CD4-positive, alpha-beta memory T cell (primary cell): ENCODE measurements at regions of chr3 and their contacts with region 1.

Region 1: DNA sequence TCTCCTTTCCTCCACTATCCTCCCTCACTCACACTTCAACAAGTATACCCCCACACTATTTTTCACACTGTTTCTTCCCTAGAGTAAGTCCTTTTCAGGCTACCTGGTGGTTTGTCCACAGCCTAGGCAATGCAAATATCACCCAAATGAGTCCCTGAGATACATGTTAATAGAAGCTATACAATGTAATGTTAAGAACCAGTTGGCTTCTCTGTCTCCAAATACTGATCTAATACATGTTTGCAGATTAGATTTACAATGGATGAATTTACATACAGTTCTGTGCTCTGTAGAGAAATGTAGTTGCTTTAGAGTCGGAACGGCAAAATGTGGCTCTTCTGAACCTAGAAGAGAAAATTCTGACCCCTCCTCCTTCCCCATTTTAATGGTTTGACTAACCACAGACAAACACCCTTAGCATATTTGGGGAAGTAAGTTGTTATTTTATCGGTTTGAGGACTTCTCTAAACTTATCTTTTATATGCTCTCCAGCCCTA is 63.6 kb upstream of the MBNL1 start:
- DNase-seq: peak in 3 of 5 donors; percentile 41 to 53 (median 47)
- H3K4me3 ChIP-seq: peak overlapping the region; percentile 41 to 63
- H3K4me3 Mint-ChIP-seq: peak overlapping the region; percentile 91 to 100 (median 98)
- H3K27ac ChIP-seq: peak overlapping the region; percentile 75
- H3K27ac Mint-ChIP-seq: peak overlapping the region; percentile 91 to 98 (median 96)
- H3K4me1 ChIP-seq: peaks cover 77% of the 10 kb centered on the region
- H3K4me1 Mint-ChIP-seq: peaks cover 41 to 79% (median 56%) of the 10 kb centered on the region in 4 donors
- H3K27me3 ChIP-seq: no peaks in the 10 kb centered on the region
- H3K27me3 Mint-ChIP-seq: no peaks in the 10 kb centered on the region

Region 2: GRCh38 chr3:152193673-152194267 is 11.4 kb before region 1 on chr3:
- CTCF ChIA-PET with region 1: interaction called, 4 read pairs
- POLR2A ChIA-PET with region 1: interaction called, 41 read pairs
- intact Hi-C with region 1: loop called (anchors 1 kb)
- DNase-seq: peak; percentile 63 to 79 (median 68)
- H3K4me3 ChIP-seq: peak overlapping the region; percentile 31 to 37
- H3K4me3 Mint-ChIP-seq: peak overlapping the region; percentile 81 to 97 (median 90)
- H3K27ac ChIP-seq: peak overlapping the region; percentile 62
- H3K27ac Mint-ChIP-seq: peak overlapping the region; percentile 89 to 98 (median 92)
- H3K4me1 ChIP-seq: peaks cover 82% of the 10 kb centered on the region
- H3K4me1 Mint-ChIP-seq: peaks cover 60 to 85% (median 72%) of the 10 kb centered on the region in 4 donors
- H3K27me3 ChIP-seq: no peaks in the 10 kb centered on the region
- H3K27me3 Mint-ChIP-seq: no peaks in the 10 kb centered on the region

Region 3: GRCh38 chr3:152219216-152219615 is 14.1 kb after region 1 on chr3:
- CTCF ChIA-PET with region 1: interaction called, 4 read pairs
- POLR2A ChIA-PET with region 1: interaction called, 23 read pairs
- intact Hi-C with region 1: loop called (anchors 2 kb)
- DNase-seq: no peak
- H3K4me3 ChIP-seq: no peak overlapping the region
- H3K4me3 Mint-ChIP-seq: peak overlapping the region; percentile 9 to 82 (median 40)
- H3K27ac ChIP-seq: no peak overlapping the region
- H3K27ac Mint-ChIP-seq: peak overlapping the region in 6 of 7 donors; percentile 9 to 65 (median 31)
- H3K4me1 ChIP-seq: peaks cover 49% of the 10 kb centered on the region
- H3K4me1 Mint-ChIP-seq: peaks cover 36 to 69% (median 50%) of the 10 kb centered on the region in 4 donors
- H3K27me3 ChIP-seq: no peaks in the 10 kb centered on the region
- H3K27me3 Mint-ChIP-seq: no peaks in the 10 kb centered on the region

Region 4: GRCh38 chr3:152235709-152236298 is 30.7 kb after region 1 on chr3:
- CTCF ChIA-PET with region 1: interaction called, 4 read pairs
- POLR2A ChIA-PET with region 1: interaction called, 193 read pairs
- intact Hi-C with region 1: no loop called
- DNase-seq: no peak
- H3K4me3 ChIP-seq: no peak overlapping the region
- H3K4me3 Mint-ChIP-seq: peak overlapping the region in 5 of 8 donors; percentile 8 to 74 (median 26)
- H3K27ac ChIP-seq: no peak overlapping the region
- H3K27ac Mint-ChIP-seq: peak overlapping the region in 6 of 7 donors; percentile 49 to 92 (median 80)
- H3K4me1 ChIP-seq: peaks cover 72% of the 10 kb centered on the region
- H3K4me1 Mint-ChIP-seq: peaks cover 55 to 83% (median 68%) of the 10 kb centered on the region in 4 donors
- H3K27me3 ChIP-seq: no peaks in the 10 kb centered on the region
- H3K27me3 Mint-ChIP-seq: no peaks in the 10 kb centered on the region

Region 5: GRCh38 chr3:152281133-152281713 is 76.1 kb after region 1 on chr3:
- CTCF ChIA-PET with region 1: interaction called, 3 read pairs
- POLR2A ChIA-PET with region 1: interaction called, 41 read pairs
- intact Hi-C with region 1: no loop called
- DNase-seq: no peak
- H3K4me3 ChIP-seq: no peak overlapping the region
- H3K4me3 Mint-ChIP-seq: peak overlapping the region; percentile 15 to 87 (median 70)
- H3K27ac ChIP-seq: peak overlapping the region; percentile 61
- H3K27ac Mint-ChIP-seq: peak overlapping the region; percentile 62 to 88 (median 76)
- H3K4me1 ChIP-seq: peaks cover 97% of the 10 kb centered on the region
- H3K4me1 Mint-ChIP-seq: peaks cover 61 to 85% (median 72%) of the 10 kb centered on the region in 4 donors
- H3K27me3 ChIP-seq: no peaks in the 10 kb centered on the region
- H3K27me3 Mint-ChIP-seq: no peaks in the 10 kb centered on the region